Activated T-helper 1 cell treated with anti-CD3 and anti-CD28 coated beads, Interleukin-12 subunit alpha, Interleukin-12 subunit beta, Interleukin-2, Interleukin-4 antibody, amounts not matched to agents 30 ng/mL and 10 ng/mL and 1 ng/mL, durations not matched to agents 14 hours and 24 hours and 36 hours (primary cell): ENCODE measurements at regions of chr1 and their contacts with region 1.

Region 1: DNA sequence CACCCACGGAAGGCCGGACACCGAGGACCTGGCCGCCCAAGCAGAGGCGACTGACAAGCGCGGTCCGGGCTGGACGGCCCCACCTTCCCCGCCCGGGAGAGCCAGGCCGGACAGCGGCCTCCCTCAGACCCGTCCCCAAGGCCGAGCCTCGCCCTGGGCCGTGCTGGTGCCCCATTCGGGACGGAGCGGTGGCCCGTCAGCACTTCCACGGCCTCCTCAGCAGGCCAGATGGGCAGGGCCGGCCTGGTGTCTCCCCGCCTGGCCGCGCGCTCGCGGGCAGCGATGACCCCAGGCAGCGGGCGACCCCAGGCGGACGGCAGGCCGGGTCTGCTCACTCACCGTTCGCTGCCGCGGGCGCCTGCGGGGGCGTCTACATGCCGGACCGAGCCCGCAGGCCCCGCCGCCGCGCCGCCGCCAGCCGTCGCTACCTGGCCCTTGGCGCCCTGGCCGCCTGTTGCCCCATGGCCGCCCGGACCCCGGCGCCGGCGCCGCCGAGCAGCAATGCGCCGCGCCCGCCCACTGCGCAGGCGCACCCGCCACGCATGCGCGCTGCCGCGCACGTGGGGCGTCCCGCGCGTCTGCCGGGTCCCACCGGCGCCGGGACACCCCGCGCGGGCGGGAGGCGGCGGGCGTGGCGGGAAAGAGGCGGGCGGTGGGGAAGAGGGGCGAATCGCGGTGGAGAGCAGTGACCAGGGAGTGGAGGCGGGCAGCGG is at the start of gene NADK:
- DNase-seq: peak; percentile 81
- H3K4me3 Mint-ChIP-seq: peak within 1 kb of the TSS; percentile 90
- H3K27ac Mint-ChIP-seq: peak within 1 kb of the TSS; percentile 87
- H3K4me1 Mint-ChIP-seq: peaks cover 53% of the 10 kb centered on the region
- H3K27me3 Mint-ChIP-seq: no peaks in the 10 kb centered on the region
- total RNA-seq, gene NADK: 95.5 and 96.8 TPM in 2 replicates

Region 2: DNA sequence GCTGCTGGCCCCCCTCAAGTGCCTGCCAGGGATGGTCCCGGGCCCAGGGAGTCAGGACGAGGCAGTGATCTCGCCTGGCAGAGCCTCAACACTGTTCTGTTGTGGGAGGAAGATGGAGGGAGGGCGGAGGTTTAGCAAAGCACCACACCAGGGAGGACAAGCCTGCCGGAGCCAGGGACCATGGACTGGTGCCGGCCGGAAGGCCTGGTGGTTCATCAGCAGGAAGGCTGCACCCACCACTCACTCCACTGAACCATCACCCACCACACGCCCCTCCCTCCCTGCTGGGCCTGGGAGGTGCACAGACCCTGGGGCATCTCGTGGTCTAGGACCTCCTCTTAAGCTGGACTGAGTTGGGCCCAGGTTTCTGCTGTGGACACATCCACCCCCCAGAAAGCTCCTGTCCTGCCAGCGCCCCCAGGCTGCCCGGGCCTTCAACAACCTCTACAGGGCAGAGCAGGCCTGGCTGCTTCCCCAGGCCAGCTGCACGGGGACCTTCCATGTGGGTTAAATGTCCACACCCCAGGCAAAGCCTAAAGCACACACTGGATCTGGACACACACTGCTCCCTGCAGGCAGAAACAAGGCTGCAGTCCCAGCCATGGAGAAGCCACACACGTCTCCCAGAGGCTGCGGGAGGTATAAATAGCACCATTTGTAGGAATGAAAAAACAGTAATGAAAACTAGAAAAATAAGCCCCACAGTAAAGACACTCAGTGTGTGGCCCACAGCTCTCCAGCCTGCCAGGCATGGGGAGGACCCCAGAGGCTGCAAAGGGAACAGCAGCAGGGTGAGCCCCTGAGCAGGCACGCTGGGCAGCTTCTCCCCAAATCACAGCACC is 227.3 kb before region 1 on chr1:
- intact Hi-C with region 1: no loop called
- DNase-seq: no peak
- H3K4me3 Mint-ChIP-seq: no peak overlapping the region
- H3K27ac Mint-ChIP-seq: no peak overlapping the region
- H3K4me1 Mint-ChIP-seq: no peaks in the 10 kb centered on the region
- H3K27me3 Mint-ChIP-seq: no peaks in the 10 kb centered on the region

Region 3: GRCh38 chr1:1721201-1721600 is 56.9 kb before region 1 on chr1:
- intact Hi-C with region 1: loop called (anchors 2 kb)
- DNase-seq: no peak
- H3K4me3 Mint-ChIP-seq: peak overlapping the region; percentile 10
- H3K27ac Mint-ChIP-seq: no peak overlapping the region
- H3K4me1 Mint-ChIP-seq: peaks cover 5% of the 10 kb centered on the region
- H3K27me3 Mint-ChIP-seq: no peaks in the 10 kb centered on the region

Region 4: GRCh38 chr1:1799716-1800115 is 21.6 kb after region 1 on chr1:
- intact Hi-C with region 1: no loop called
- DNase-seq: no peak
- H3K4me3 Mint-ChIP-seq: no peak overlapping the region
- H3K27ac Mint-ChIP-seq: peak overlapping the region; percentile 22
- H3K4me1 Mint-ChIP-seq: peaks cover 34% of the 10 kb centered on the region
- H3K27me3 Mint-ChIP-seq: no peaks in the 10 kb centered on the region

Region 5: DNA sequence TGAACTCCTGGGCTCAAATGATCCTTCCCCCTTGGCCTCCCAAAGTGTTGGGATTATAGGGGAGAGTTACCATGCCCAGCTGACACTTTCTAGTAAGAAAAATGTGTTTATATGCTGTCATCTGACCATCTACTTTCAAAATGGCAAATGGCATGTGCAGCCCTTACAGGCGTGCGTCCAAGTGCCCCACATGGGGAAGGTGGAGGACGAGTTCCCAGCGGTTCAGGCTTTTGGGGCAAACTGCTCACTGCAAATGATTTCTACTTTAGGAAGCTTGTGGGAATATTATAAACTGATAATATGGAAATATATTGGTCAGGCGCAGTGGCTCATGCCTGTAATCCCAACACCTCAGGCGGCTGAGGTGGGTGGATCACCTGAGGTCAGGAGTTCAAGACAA is 41.7 kb after region 1 on chr1:
- intact Hi-C with region 1: loop called (anchors 5 kb)
- DNase-seq: no peak
- H3K4me3 Mint-ChIP-seq: no peak overlapping the region
- H3K27ac Mint-ChIP-seq: peak overlapping the region; percentile 18
- H3K4me1 Mint-ChIP-seq: peaks cover 11% of the 10 kb centered on the region
- H3K27me3 Mint-ChIP-seq: no peaks in the 10 kb centered on the region

Region 6: GRCh38 chr1:1906185-1907097 is 128.3 kb after region 1 on chr1:
- intact Hi-C with region 1: loop called (anchors 2 kb)
- DNase-seq: peak; percentile 61
- H3K4me3 Mint-ChIP-seq: peak overlapping the region; percentile 68
- H3K27ac Mint-ChIP-seq: peak overlapping the region; percentile 76
- H3K4me1 Mint-ChIP-seq: peaks cover 16% of the 10 kb centered on the region
- H3K27me3 Mint-ChIP-seq: peaks cover 2% of the 10 kb centered on the region